Esophagus squamous epithelium (tissue), 5 donors: ENCODE measurements at regions of chr6 and their contacts with region 1.

Region 1: GRCh38 chr6:137944793-137945498 is 77.9 kb downstream of the TNFAIP3 start:
- DNase-seq: no peak
- H3K4me3 ChIP-seq: peak overlapping the region in 1 of 4 donors; percentile 18
- H3K27ac ChIP-seq: peak overlapping the region in 1 of 4 donors; percentile 33
- H3K4me1 ChIP-seq: peaks cover 0 to 33% (median 3%) of the 10 kb centered on the region in 3 donors
- H3K27me3 ChIP-seq: no peaks in the 10 kb centered on the region
- CTCF ChIP-seq: peak; percentile 49 to 88 (median 80)
- POLR2A ChIP-seq: no peak

Region 2: GRCh38 chr6:137873273-137873762 is 71.6 kb before region 1 on chr6:
- intact Hi-C with region 1: loop called (anchors 10 kb)
- DNase-seq: peak; percentile 24
- H3K4me3 ChIP-seq: peak overlapping the region in 2 of 4 donors; percentile 16 to 39
- H3K27ac ChIP-seq: peak overlapping the region; percentile 37 to 96 (median 89)
- H3K4me1 ChIP-seq: peaks cover 33 to 73% (median 47%) of the 10 kb centered on the region in 3 donors
- H3K27me3 ChIP-seq: no peaks in the 10 kb centered on the region
- CTCF ChIP-seq: no peak
- POLR2A ChIP-seq: peak in 2 of 4 donors; percentile 14 to 44

Region 3: GRCh38 chr6:138037009-138037504 is 92.1 kb after region 1 on chr6:
- intact Hi-C with region 1: no loop called
- DNase-seq: no peak
- H3K4me3 ChIP-seq: no peak overlapping the region
- H3K27ac ChIP-seq: peak overlapping the region; percentile 71 to 92 (median 88)
- H3K4me1 ChIP-seq: peaks cover 7 to 46% (median 23%) of the 10 kb centered on the region in 3 donors
- H3K27me3 ChIP-seq: no peaks in the 10 kb centered on the region
- CTCF ChIP-seq: no peak
- POLR2A ChIP-seq: no peak